Heart right ventricle (tissue), 16 donors: ENCODE measurements at regions of chr2 and their contacts with region 1.

Region 1: GRCh38 chr2:42196403-42197267 is 27.5 kb downstream of the EML4 start:
- DNase-seq: peak in 1 of 2 donors; percentile 61
- ATAC-seq: peak; percentile 50 to 91 (median 80)
- H3K4me3 ChIP-seq: peak overlapping the region in 3 of 10 donors; percentile 12 to 23 (median 13)
- H3K27ac ChIP-seq: peak overlapping the region in 4 of 10 donors; percentile 29 to 57 (median 41)
- H3K4me1 ChIP-seq: peaks cover 0 to 66% (median 20%) of the 10 kb centered on the region in 9 donors
- H3K27me3 ChIP-seq: no peaks in the 10 kb centered on the region
- CTCF ChIP-seq: peak; percentile 19 to 79 (median 61)

Region 2: GRCh38 chr2:41966431-41966893 is 230.2 kb before region 1 on chr2:
- intact Hi-C with region 1: no loop called
- DNase-seq: peak; percentile 82 to 85
- ATAC-seq: peak; percentile 76 to 86 (median 83)
- H3K4me3 ChIP-seq: no peak overlapping the region
- H3K27ac ChIP-seq: peak overlapping the region; percentile 69 to 82 (median 77)
- H3K4me1 ChIP-seq: peaks cover 0 to 59% (median 36%) of the 10 kb centered on the region in 9 donors
- H3K27me3 ChIP-seq: no peaks in the 10 kb centered on the region
- CTCF ChIP-seq: no peak

Region 3: DNA sequence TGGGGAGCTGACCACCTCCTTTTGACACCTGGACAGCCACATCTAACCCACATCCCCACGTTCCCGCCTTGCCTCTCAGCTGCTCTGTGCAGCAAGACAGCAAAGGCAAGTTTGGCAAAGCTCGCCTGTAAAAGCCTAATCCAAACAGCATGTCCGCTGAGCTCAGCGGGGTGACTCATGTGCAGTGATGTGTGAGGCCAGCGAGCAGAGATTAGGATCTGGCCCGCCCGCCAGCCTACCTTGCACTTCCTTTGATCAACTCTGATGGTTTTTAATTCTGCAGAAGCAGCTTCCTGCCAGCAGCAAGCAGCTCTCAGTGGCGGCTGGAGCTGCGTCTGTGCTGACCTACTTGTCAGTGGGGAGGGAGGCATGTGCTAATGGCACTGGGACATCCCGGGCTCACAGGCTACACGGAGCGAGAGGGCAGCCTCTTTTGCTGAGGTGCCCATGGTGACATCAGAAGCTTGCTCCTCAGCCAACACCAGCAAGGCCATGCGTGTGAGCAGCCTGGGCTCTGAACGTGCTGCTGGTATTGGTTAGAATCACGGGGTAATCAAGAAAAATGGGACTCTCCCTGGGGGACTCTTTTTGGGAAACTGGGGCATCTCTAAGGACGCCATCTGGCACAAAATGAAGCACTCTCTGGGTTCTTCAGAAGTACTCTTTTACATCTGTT is 63.5 kb before region 1 on chr2:
- intact Hi-C with region 1: loop called in 1 of 10 experiments (anchors 10 kb)
- DNase-seq: peak; percentile 71 to 83
- ATAC-seq: peak; percentile 87 to 96 (median 92)
- H3K4me3 ChIP-seq: peak overlapping the region in 7 of 10 donors; percentile 13 to 29 (median 20)
- H3K27ac ChIP-seq: peak overlapping the region in 7 of 10 donors; percentile 53 to 88 (median 65)
- H3K4me1 ChIP-seq: peaks cover 5 to 81% (median 46%) of the 10 kb centered on the region in 9 donors
- H3K27me3 ChIP-seq: peaks cover 0 to 9% (median 0%) of the 10 kb centered on the region in 7 donors
- CTCF ChIP-seq: no peak

Region 4: DNA sequence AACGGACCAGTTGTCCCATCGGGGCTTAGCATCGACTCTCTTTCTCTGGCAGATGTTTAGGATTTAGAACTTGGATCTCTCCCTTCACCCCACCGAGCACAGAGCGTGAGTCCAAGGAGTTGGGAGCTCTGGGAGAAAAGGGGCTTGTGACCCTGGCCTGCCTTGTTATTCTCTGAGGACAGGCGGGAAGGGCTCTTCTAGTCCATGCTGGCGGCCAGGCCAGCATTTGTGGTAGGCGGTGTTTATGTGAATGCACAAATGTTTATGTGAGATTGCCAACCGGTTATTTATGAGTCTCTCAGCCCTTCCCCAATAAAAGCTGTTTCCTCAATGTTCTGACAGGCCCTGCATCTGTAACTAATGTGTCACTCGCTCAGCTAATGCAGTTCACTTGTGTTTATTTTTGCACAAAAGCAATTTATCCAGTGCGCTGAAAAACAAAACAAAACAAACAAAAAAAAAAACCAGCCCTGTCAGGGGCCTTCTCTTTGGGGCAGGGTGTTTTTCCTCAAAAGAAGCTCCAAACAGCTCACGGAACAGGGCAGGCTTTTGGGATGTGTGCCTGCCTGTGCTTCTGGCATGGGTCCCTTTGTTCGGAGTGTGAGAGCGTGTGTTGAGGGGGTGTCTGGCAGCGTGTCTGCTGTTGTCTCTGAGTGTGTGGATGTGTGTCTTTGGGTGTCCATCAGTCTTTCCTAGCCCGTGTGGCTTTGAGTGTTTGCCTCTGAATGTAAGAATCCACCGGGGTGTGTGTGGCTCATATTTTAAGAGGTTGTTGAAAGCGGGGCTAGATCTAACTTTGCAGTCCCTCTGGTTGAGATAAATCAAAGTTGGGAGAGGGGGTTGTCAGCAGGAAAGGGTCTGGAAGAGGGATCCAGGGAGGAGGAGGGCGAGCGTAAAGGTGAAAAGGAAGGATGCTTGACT is 648.5 kb after region 1 on chr2:
- intact Hi-C with region 1: no loop called
- DNase-seq: no peak
- ATAC-seq: peak in 6 of 8 donors; percentile 12 to 60 (median 45)
- H3K4me3 ChIP-seq: no peak overlapping the region
- H3K27ac ChIP-seq: peak overlapping the region in 8 of 10 donors; percentile 4 to 71 (median 44)
- H3K4me1 ChIP-seq: peaks cover 0 to 29% (median 12%) of the 10 kb centered on the region in 9 donors
- H3K27me3 ChIP-seq: no peaks in the 10 kb centered on the region
- CTCF ChIP-seq: no peak